Left ventricle myocardium superior (tissue), 1 donor: ENCODE measurements at regions of chr2 and their contacts with region 1.

Region 1: GRCh38 chr2:34096562-34097171 is 497.6 kb upstream of the FAM98A start:
- DNase-seq: no peak
- ATAC-seq: no peak

Region 2: DNA sequence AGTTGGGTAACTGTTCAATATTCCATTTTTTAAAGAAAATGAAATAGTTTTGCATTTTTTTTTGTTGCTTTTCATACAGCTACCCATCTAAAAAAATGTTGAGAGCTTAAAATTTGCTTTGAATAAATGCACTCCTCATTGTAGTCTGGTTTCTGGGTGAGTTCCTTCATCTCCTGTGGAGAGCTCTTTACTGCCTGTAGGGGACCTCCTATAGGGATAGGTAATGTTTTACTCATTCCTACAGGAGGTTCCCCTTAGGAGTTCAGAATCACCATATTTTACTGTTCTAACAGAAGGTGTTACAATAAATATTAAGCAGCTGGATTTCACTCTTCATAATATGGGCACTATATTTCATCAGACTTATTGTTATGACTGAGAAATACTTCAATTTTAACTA is 1311.7 kb after region 1 on chr2:
- intact Hi-C with region 1: loop called (anchors 10 kb)
- DNase-seq: no peak
- ATAC-seq: no peak